Dorsolateral prefrontal cortex (tissue), 120 donors: ENCODE measurements at regions of chr1 and their contacts with region 1.

Region 1: GRCh38 chr1:54810100-54810942 is 9.2 kb upstream of the TTC22 start:
- DNase-seq: peak; percentile 51 to 81 (median 69)
- H3K4me3 ChIP-seq: no peak overlapping the region
- H3K27ac ChIP-seq: no peak overlapping the region
- H3K27me3 ChIP-seq: peaks cover 0 to 10% (median 0%) of the 10 kb centered on the region in 45 donors
- CTCF ChIP-seq: peak; percentile 30 to 88 (median 76)

Region 2: GRCh38 chr1:53860967-53861411 is 949.3 kb before region 1 on chr1:
- intact Hi-C with region 1: loop called in 1 of 2 experiments (anchors 10 kb)
- DNase-seq: peak in 3 of 10 donors; percentile 17 to 29 (median 25)
- H3K4me3 ChIP-seq: no peak overlapping the region
- H3K27ac ChIP-seq: no peak overlapping the region
- H3K27me3 ChIP-seq: no peaks in the 10 kb centered on the region
- CTCF ChIP-seq: peak; percentile 45 to 90 (median 77)

Region 3: GRCh38 chr1:54070171-54070837 is 740.0 kb before region 1 on chr1:
- intact Hi-C with region 1: loop called (anchors 5 to 10 kb)
- DNase-seq: no peak
- H3K4me3 ChIP-seq: no peak overlapping the region
- H3K27ac ChIP-seq: no peak overlapping the region
- H3K27me3 ChIP-seq: no peaks in the 10 kb centered on the region
- CTCF ChIP-seq: peak; percentile 53 to 96 (median 86)

Region 4: DNA sequence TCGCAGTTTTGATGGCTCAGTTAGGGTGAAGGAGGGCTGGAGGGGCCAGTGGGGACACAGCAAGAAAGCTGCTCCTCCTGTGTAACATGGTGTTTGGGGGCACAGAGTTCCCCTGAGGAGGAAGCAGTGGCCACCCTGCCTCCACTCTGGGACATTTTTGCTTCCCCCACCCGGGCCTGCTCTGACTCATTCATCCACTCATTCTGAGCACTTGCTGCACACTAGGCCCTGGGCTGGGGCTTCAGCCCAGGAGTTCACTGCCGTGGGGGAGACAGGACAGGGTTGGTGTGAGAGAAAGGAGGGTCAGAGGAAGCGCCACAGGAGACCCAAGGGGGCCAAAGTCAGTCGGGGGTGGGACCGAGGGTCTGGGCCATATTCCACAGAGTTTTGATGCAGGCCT is 303.7 kb before region 1 on chr1:
- intact Hi-C with region 1: no loop called
- DNase-seq: peak in 1 of 10 donors; percentile 23
- H3K4me3 ChIP-seq: no peak overlapping the region
- H3K27ac ChIP-seq: no peak overlapping the region
- H3K27me3 ChIP-seq: peaks cover 0 to 6% (median 0%) of the 10 kb centered on the region in 45 donors
- CTCF ChIP-seq: no peak

Region 5: GRCh38 chr1:54865238-54866073 is 55.1 kb after region 1 on chr1:
- intact Hi-C with region 1: loop called in 1 of 2 experiments (anchors 5 kb)
- DNase-seq: peak in 4 of 10 donors; percentile 58 to 67 (median 62)
- H3K4me3 ChIP-seq: peak overlapping the region in 2 of 59 donors; percentile 5 to 8
- H3K27ac ChIP-seq: peak overlapping the region in 27 of 59 donors; percentile 2 to 76 (median 41)
- H3K27me3 ChIP-seq: no peaks in the 10 kb centered on the region
- CTCF ChIP-seq: peak in 48 of 56 donors; percentile 14 to 75 (median 41)